ENCODE measurements at regions of chr1 and their contacts with region 1.

Region 1: GRCh38 chr1:152034646-152035405 is 2.0 kb downstream of the S100A11 start:
- DNase-seq: peak; percentile 80 to 86
- ATAC-seq: peak; percentile 44 to 59
- H3K4me3 ChIP-seq: peak overlapping the region; percentile 78
- H3K27ac ChIP-seq: peak overlapping the region; percentile 98 to 100
- H3K4me1 ChIP-seq: peaks cover 31% of the 10 kb centered on the region
- CTCF ChIP-seq: peak; percentile 73
- EP300 ChIP-seq: no peak
- POLR2A ChIP-seq: no peak
- RAD21 ChIP-seq: peak; percentile 44 to 54

Region 2: GRCh38 chr1:151924679-151925587 is 109.9 kb before region 1 on chr1:
- CTCF ChIA-PET with region 1: interaction called, 10 read pairs
- POLR2A ChIA-PET with region 1: no interaction called
- DNase-seq: no peak
- ATAC-seq: no peak
- H3K4me3 ChIP-seq: no peak overlapping the region
- H3K27ac ChIP-seq: no peak overlapping the region
- H3K4me1 ChIP-seq: no peaks in the 10 kb centered on the region
- CTCF ChIP-seq: no peak
- EP300 ChIP-seq: no peak
- POLR2A ChIP-seq: no peak
- RAD21 ChIP-seq: no peak

Region 3: DNA sequence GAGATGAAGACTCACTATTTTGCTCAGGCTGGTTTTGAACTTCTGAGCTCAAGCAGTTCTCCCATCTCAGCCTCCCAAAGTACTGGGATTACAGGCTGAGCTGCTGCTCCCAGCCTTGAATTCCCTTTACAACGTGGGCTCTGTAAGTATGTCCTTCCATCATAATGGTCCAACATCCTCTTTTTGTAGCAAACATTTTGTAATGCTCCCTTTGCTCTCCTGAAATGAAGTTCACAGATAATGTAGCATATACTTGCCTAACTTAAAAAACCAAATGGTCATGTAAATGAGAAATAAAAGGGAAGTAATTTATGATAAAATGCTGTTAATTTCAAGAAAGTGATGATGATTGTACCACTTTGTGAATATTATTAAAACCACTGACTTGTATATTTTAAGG is 95.0 kb before region 1 on chr1:
- CTCF ChIA-PET with region 1: interaction called, 49 read pairs
- POLR2A ChIA-PET with region 1: interaction called, 3 read pairs
- DNase-seq: no peak
- ATAC-seq: no peak
- H3K4me3 ChIP-seq: no peak overlapping the region
- H3K27ac ChIP-seq: peak overlapping the region in 1 of 2 experiments; percentile 37; a peak in 2 of 6 replicates
- H3K4me1 ChIP-seq: peaks cover 75% of the 10 kb centered on the region
- CTCF ChIP-seq: no peak
- EP300 ChIP-seq: no peak
- POLR2A ChIP-seq: no peak
- RAD21 ChIP-seq: no peak

Region 4: GRCh38 chr1:152001391-152002249 is 33.2 kb before region 1 on chr1:
- CTCF ChIA-PET with region 1: interaction called, 48 read pairs
- POLR2A ChIA-PET with region 1: interaction called, 4 read pairs
- DNase-seq: peak; percentile 66 to 89
- ATAC-seq: peak; percentile 66 to 70
- H3K4me3 ChIP-seq: no peak overlapping the region
- H3K27ac ChIP-seq: peak overlapping the region; percentile 72 to 83
- H3K4me1 ChIP-seq: peaks cover 52% of the 10 kb centered on the region
- CTCF ChIP-seq: peak; percentile 95
- EP300 ChIP-seq: no peak
- POLR2A ChIP-seq: no peak
- RAD21 ChIP-seq: peak; percentile 99

Region 5: DNA sequence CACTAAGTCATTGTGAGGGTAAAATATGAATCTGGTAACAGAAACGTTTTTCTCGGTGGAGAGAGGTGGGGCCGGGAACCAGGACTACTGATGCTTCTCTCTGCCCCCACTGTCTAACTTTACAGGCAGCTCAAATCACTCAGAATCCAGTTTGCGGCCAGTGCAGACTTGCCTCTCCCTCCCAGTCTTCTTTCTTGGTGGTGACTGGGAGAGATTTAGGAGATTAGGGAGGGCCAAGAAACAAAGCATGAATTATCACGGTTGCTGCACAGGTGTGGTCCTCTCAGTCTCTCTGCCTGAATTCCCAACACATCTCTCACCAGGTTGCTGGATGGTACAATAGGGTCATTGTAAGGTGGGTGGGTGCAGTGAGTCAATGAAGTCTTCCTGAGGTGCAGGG is 10.7 kb before region 1 on chr1:
- CTCF ChIA-PET with region 1: interaction called, 22 read pairs
- POLR2A ChIA-PET with region 1: interaction called, 10 read pairs
- DNase-seq: no peak
- ATAC-seq: no peak
- H3K4me3 ChIP-seq: no peak overlapping the region
- H3K27ac ChIP-seq: no peak overlapping the region
- H3K4me1 ChIP-seq: peaks cover 4% of the 10 kb centered on the region
- CTCF ChIP-seq: no peak
- EP300 ChIP-seq: no peak
- POLR2A ChIP-seq: no peak
- RAD21 ChIP-seq: no peak